ENCODE measurements at regions of chr2 and their contacts with region 1.

Region 1: DNA sequence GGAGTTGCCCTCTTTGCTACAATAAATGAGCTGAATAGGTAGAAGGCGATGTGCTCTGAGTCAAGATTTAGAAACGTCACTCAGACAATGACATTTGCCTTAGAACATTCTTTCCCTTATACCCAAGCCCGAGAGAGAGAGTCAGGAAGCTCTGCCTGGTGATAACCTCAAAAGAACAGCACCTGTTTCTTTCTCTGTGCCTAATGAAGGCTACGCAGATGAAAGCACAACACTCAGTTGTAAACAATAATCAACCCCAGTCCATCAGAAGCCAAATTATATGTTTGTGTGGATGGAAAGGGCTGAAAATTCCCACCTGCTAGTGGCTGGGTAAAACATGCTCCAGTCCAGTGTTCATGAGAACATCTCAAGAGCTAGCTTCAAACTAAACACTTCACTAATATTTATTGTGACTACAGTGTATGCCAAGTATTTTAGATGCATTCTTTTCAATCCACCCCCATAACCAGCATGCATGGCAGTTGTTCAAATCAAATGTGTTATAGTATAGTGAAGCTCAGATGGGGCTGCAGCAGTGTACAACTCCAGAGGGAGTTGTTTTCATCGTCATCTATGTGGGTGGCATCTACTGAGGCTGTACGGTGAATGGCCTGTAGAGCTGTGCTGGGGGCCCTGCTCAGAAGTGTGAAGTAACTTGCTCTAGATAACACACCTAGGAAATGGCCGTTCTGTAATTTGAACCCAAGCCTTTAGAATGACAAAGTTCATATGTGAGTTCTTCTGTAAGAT is 72.0 kb upstream of the LRATD1 start:
- DNase-seq: no peak
- H3K4me3 ChIP-seq: no peak overlapping the region
- H3K27me3 ChIP-seq: no peaks in the 10 kb centered on the region
- CTCF ChIP-seq: no peak

Region 2: GRCh38 chr2:12658310-12658945 is 1902.1 kb before region 1 on chr2:
- CTCF ChIA-PET with region 1: no interaction called
- POLR2A ChIA-PET with region 1: interaction called, 16 read pairs
- DNase-seq: no peak
- H3K4me3 ChIP-seq: no peak overlapping the region
- H3K27me3 ChIP-seq: peaks cover 5% of the 10 kb centered on the region; the same call in 1 of the 2 replicates
- CTCF ChIP-seq: no peak

Measured in BJ (cell line).